ENCODE measurements at regions of chr9 and their contacts with region 1.

Region 1: DNA sequence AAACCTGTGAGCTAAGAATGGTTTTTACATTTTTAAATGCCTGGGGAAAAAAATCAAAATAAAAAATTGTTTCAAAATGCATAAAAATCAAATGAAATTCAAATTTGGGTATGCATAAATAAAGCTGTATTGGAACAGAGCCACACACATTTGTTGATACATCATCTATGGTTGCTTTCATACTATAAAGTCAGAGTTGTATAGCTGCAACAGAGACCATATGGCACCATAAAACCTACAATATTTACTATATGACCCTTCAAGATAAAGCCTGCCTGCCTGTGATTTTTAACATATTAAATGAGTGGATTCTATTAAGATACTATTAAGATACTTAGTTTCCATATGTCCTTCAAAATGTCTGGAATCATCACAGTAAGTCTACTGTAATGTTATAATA is 40.0 kb downstream of the AUH start:
- DNase-seq: no peak
- H3K4me3 Mint-ChIP-seq: no peak overlapping the region
- H3K27ac Mint-ChIP-seq: no peak overlapping the region
- H3K4me1 Mint-ChIP-seq: peaks cover 15% of the 10 kb centered on the region
- H3K27me3 Mint-ChIP-seq: no peaks in the 10 kb centered on the region

Region 2: GRCh38 chr9:91291866-91292265 is 29.8 kb before region 1 on chr9:
- intact Hi-C with region 1: loop called (anchors 1 kb)
- DNase-seq: no peak
- H3K4me3 Mint-ChIP-seq: no peak overlapping the region
- H3K27ac Mint-ChIP-seq: no peak overlapping the region
- H3K4me1 Mint-ChIP-seq: peaks cover 11% of the 10 kb centered on the region
- H3K27me3 Mint-ChIP-seq: no peaks in the 10 kb centered on the region

Region 3: DNA sequence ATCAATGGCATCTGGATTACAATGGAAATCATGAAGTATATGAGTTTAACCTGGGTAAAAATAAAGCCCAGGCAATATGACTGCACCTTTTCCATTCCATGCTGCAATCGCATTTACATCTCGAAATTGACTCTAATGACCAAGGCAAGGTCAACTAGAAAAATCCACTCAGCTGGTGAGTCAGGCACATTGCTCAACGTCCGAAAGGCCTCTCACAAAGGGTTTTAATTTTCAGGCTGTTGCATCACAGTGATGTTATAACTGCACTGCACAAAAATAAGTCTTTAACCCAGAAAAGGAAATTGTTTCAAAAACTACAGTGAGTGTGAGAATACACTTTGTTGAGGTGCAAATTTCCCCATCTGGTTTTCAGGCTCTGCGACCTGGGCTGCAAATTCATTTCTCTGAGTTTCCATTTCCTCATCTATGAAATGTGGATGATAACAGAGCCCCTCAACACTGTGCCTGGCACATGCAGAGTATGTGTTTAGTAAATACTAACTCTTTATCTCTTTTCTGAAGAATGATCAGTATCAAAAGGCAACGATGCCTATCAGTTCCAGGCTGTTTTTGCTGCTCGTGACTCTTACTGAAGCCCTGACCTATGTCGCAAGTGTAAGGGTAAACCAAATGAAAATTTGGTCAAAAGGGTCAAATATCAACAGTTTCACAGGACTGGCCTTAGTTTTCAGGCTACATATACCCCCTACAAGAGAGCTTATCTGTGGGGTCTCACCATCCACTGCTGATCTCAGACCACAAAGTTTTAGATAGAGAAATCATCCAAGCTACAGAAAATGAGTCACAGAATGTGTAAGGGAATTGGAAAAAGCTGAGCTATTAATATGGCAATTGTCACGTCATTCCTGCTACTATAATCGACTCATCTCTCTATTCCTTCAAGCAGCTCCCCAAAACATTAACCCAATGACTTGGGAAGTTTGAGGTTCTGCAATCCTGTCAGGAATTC is 97.8 kb after region 1 on chr9:
- intact Hi-C with region 1: no loop called
- DNase-seq: no peak
- H3K4me3 Mint-ChIP-seq: peak overlapping the region; percentile 90
- H3K27ac Mint-ChIP-seq: peak overlapping the region; percentile 89
- H3K4me1 Mint-ChIP-seq: peaks cover 71% of the 10 kb centered on the region
- H3K27me3 Mint-ChIP-seq: no peaks in the 10 kb centered on the region

Measured in activated T-helper 1 cell treated with anti-CD3 and anti-CD28 coated beads, Interleukin-12 subunit alpha, Interleukin-12 subunit beta, Interleukin-2, Interleukin-4 antibody, amounts not matched to agents 30 ng/mL and 10 ng/mL and 1 ng/mL, durations not matched to agents 14 hours and 24 hours and 36 hours (primary cell).